Left ventricle myocardium inferior (tissue), 1 donor: ENCODE measurements at regions of chrX and their contacts with region 1.

Region 1: GRCh38 chrX:119004920-119005524 is 30.6 kb downstream of the LONRF3 start:
- DNase-seq: peak; percentile 41
- H3K4me3 ChIP-seq: no peak overlapping the region
- H3K27ac ChIP-seq: no peak overlapping the region
- H3K4me1 ChIP-seq: peaks cover 10% of the 10 kb centered on the region
- H3K27me3 ChIP-seq: no peaks in the 10 kb centered on the region
- CTCF ChIP-seq: peak; percentile 83

Region 2: GRCh38 chrX:118847676-118848075 is 157.3 kb before region 1 on chrX:
- intact Hi-C with region 1: loop called (anchors 2 kb)
- DNase-seq: no peak
- H3K4me3 ChIP-seq: no peak overlapping the region
- H3K27ac ChIP-seq: no peak overlapping the region
- H3K4me1 ChIP-seq: no peaks in the 10 kb centered on the region
- H3K27me3 ChIP-seq: no peaks in the 10 kb centered on the region
- CTCF ChIP-seq: peak; percentile 68

Region 3: DNA sequence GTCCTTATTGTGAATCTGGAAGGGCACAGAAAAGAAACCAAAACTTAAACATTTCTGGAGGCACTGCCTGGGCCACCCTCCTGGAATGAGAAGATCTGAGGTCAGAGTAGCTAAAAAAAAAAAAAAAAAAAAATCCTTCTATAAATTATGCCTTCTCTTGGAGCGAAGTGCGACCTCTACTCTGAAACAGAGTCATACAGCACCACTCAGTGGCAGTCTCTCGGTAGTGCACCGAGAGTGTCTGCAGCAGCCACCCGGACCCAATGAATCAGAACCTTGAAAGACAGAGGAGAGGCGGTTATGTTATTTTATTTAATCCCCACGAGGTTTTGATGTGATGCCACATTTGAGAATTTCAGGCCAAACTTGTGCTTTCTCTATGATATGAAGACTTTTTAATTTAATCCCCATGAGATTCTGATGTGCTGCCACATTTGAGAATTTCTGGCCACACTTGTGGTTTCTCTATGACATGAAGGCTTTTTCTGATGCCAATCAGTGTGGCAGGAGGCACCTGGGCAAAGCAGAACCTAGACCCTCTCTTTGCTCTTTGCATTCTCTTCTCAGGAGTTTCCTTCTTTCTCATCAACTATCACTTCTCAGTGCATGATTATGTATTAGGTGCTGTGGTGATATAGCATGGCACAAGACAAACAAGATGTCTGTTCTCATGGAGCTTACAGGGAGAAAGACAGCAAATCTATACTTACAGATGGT is 62.2 kb after region 1 on chrX:
- intact Hi-C with region 1: loop called (anchors 10 kb)
- DNase-seq: peak; percentile 43
- H3K4me3 ChIP-seq: no peak overlapping the region
- H3K27ac ChIP-seq: no peak overlapping the region
- H3K4me1 ChIP-seq: peaks cover 5% of the 10 kb centered on the region
- H3K27me3 ChIP-seq: no peaks in the 10 kb centered on the region
- CTCF ChIP-seq: peak; percentile 70